ENCODE measurements at regions of chr3 and their contacts with region 1.

Region 1: DNA sequence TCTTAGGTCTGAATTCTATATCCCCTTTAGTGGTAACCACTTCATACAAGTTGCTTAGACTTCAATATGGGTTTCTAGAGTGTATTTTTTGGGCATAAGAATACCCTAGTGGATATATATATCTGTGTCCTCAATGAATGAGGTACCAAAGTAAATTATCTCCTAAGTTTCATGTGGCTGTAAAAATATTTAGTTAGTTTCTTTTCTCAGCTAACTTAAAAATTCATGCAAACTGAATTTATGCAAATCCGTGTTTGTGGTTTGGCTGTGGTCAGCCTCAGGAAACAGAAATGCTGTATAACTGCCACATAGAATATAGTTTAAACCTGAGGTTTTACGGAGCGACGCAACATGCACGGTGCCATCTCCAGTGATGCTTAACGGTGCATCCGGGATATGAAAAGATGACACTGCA is 80.3 kb downstream of the PEX5L start:
- DNase-seq: peak; percentile 84
- H3K4me3 Mint-ChIP-seq: no peak overlapping the region
- H3K27ac Mint-ChIP-seq: no peak overlapping the region
- H3K4me1 Mint-ChIP-seq: peaks cover 18% of the 10 kb centered on the region
- H3K27me3 Mint-ChIP-seq: peaks cover 18% of the 10 kb centered on the region

Region 2: GRCh38 chr3:179967622-179968021 is 11.2 kb after region 1 on chr3:
- intact Hi-C with region 1: loop called (anchors 1 kb)
- DNase-seq: no peak
- H3K4me3 Mint-ChIP-seq: no peak overlapping the region
- H3K27ac Mint-ChIP-seq: no peak overlapping the region
- H3K4me1 Mint-ChIP-seq: peaks cover 6% of the 10 kb centered on the region
- H3K27me3 Mint-ChIP-seq: peaks cover 7% of the 10 kb centered on the region

Region 3: GRCh38 chr3:180026997-180027396 is 70.6 kb after region 1 on chr3:
- intact Hi-C with region 1: no loop called
- DNase-seq: no peak
- H3K4me3 Mint-ChIP-seq: no peak overlapping the region
- H3K27ac Mint-ChIP-seq: no peak overlapping the region
- H3K4me1 Mint-ChIP-seq: no peaks in the 10 kb centered on the region
- H3K27me3 Mint-ChIP-seq: peaks cover 2% of the 10 kb centered on the region

Measured in activated CD4-positive, alpha-beta T cell treated with anti-CD3 and anti-CD28 coated beads, Interleukin-2, amount 10 ng/mL, durations not matched to agents 24 days and 14 days (primary cell).